A673 (cell line): ENCODE measurements at regions of chr9 and their contacts with region 1.

Region 1: GRCh38 chr9:34363619-34364351 is 12.9 kb downstream of the MYORG start:
- DNase-seq: peak; percentile 96
- H3K4me3 ChIP-seq: peak overlapping the region; percentile 33
- H3K27ac ChIP-seq: peak overlapping the region; percentile 91
- H3K4me1 ChIP-seq: peaks cover 32% of the 10 kb centered on the region
- H3K27me3 ChIP-seq: no peaks in the 10 kb centered on the region
- CTCF ChIP-seq: no peak

Region 2: GRCh38 chr9:34386656-34387055 is 22.9 kb after region 1 on chr9:
- CTCF ChIA-PET with region 1: no interaction called
- POLR2A ChIA-PET with region 1: interaction called, 26 read pairs
- intact Hi-C with region 1: no loop called
- DNase-seq: no peak
- H3K4me3 ChIP-seq: no peak overlapping the region
- H3K27ac ChIP-seq: no peak overlapping the region
- H3K4me1 ChIP-seq: no peaks in the 10 kb centered on the region
- H3K27me3 ChIP-seq: no peaks in the 10 kb centered on the region
- CTCF ChIP-seq: no peak

Region 3: GRCh38 chr9:34620061-34620994 is 256.5 kb after region 1 on chr9 and contains the start of gene DCTN3:
- CTCF ChIA-PET with region 1: no interaction called
- POLR2A ChIA-PET with region 1: interaction called, 11 read pairs
- intact Hi-C with region 1: no loop called
- DNase-seq: peak; percentile 97
- H3K4me3 ChIP-seq: peak within 1 kb of the TSS; percentile 94
- H3K27ac ChIP-seq: peak within 1 kb of the TSS; percentile 72
- H3K4me1 ChIP-seq: peaks cover 3% of the 10 kb centered on the region
- H3K27me3 ChIP-seq: peaks cover 16% of the 10 kb centered on the region
- CTCF ChIP-seq: no peak
- total RNA-seq, gene DCTN3: 79.3 and 89.4 TPM in 2 replicates